ENCODE measurements at regions of chr2 and their contacts with region 1.

Region 1: DNA sequence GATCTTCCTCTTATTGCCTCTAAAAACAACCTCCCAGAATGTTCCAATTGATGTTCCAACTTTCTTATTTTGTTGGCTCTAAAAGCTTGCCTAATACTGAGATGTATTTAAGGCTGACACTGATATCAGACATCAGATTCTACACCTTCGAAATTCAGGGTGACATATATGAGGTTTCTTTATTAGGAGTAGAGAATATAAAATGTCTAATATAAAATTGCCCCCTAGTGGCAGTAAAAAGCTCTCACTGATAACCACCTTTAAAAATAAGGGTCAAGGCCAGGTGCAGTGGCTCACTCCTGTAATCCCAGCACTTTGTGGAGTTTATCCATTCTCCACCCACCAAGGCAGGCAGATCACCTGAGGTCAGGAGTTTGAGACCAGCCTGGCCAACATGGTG is 789.7 kb upstream of the SLC39A10 start:
- DNase-seq: peak; percentile 47
- H3K4me3 ChIP-seq: no peak overlapping the region
- H3K27ac ChIP-seq: no peak overlapping the region
- H3K4me1 ChIP-seq: no peaks in the 10 kb centered on the region
- H3K27me3 ChIP-seq: no peaks in the 10 kb centered on the region
- CTCF ChIP-seq: peak; percentile 28 to 35
- POLR2A ChIP-seq: no peak

Region 2: GRCh38 chr2:194166818-194167217 is 700.5 kb before region 1 on chr2:
- CTCF ChIA-PET with region 1: interaction called, 6 read pairs
- POLR2A ChIA-PET with region 1: no interaction called
- dilution Hi-C with region 1: no loop called
- intact Hi-C with region 1: loop called (anchors 10 kb)
- DNase-seq: peak; percentile 6
- H3K4me3 ChIP-seq: no peak overlapping the region
- H3K27ac ChIP-seq: no peak overlapping the region
- H3K4me1 ChIP-seq: no peaks in the 10 kb centered on the region
- H3K27me3 ChIP-seq: no peaks in the 10 kb centered on the region
- CTCF ChIP-seq: peak; percentile 27 to 38
- POLR2A ChIP-seq: no peak

Region 3: GRCh38 chr2:194545978-194546377 is 321.4 kb before region 1 on chr2:
- CTCF ChIA-PET with region 1: interaction called, 70 read pairs
- POLR2A ChIA-PET with region 1: no interaction called
- dilution Hi-C with region 1: no loop called
- intact Hi-C with region 1: loop called (anchors 1 kb)
- DNase-seq: peak; percentile 40
- H3K4me3 ChIP-seq: no peak overlapping the region
- H3K27ac ChIP-seq: no peak overlapping the region
- H3K4me1 ChIP-seq: peaks cover 2% of the 10 kb centered on the region
- H3K27me3 ChIP-seq: no peaks in the 10 kb centered on the region
- CTCF ChIP-seq: peak in 1 of 2 donors; percentile 6
- POLR2A ChIP-seq: no peak

Region 4: GRCh38 chr2:194559964-194560363 is 307.4 kb before region 1 on chr2:
- CTCF ChIA-PET with region 1: interaction called, 10 read pairs
- POLR2A ChIA-PET with region 1: no interaction called
- dilution Hi-C with region 1: no loop called
- intact Hi-C with region 1: no loop called
- DNase-seq: no peak
- H3K4me3 ChIP-seq: no peak overlapping the region
- H3K27ac ChIP-seq: no peak overlapping the region
- H3K4me1 ChIP-seq: no peaks in the 10 kb centered on the region
- H3K27me3 ChIP-seq: no peaks in the 10 kb centered on the region
- CTCF ChIP-seq: peak in 1 of 2 donors; percentile 20
- POLR2A ChIP-seq: no peak

Region 5: DNA sequence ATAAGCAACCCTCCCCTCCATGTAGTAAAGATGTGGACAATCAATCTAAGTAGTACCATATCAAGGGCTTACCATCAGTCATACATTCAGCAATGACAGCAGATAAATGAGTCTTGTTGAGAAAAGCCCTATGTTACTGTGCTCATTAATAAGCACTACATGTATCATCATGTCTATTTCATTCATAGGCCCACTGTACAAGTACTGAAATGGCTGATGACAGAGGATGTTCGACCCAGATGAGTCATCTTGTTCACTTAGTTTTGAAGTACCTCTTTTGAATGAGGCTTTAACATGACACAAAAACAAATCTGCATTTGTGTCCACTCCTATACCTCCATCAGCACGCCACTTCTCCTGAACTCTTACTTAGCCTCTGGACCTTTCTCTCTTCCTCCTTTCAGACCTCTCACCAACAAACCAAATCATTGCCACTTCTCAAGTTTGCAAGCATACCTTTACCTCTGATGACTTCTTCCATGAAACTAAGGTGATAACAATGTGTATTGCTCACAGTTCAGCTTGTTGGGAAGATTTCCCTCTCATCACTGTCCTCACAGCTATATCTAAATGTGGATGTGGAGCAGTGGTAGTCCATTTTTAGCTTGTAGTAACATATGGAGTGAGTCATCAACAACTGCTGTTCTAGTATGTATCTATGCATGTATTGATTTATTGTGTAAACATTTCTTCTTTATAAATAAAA is 131.3 kb before region 1 on chr2:
- CTCF ChIA-PET with region 1: interaction called, 4 read pairs
- POLR2A ChIA-PET with region 1: no interaction called
- dilution Hi-C with region 1: no loop called
- intact Hi-C with region 1: loop called (anchors 5 kb)
- DNase-seq: no peak
- H3K4me3 ChIP-seq: no peak overlapping the region
- H3K27ac ChIP-seq: no peak overlapping the region
- H3K4me1 ChIP-seq: no peaks in the 10 kb centered on the region
- H3K27me3 ChIP-seq: no peaks in the 10 kb centered on the region
- CTCF ChIP-seq: no peak
- POLR2A ChIP-seq: no peak

Region 6: DNA sequence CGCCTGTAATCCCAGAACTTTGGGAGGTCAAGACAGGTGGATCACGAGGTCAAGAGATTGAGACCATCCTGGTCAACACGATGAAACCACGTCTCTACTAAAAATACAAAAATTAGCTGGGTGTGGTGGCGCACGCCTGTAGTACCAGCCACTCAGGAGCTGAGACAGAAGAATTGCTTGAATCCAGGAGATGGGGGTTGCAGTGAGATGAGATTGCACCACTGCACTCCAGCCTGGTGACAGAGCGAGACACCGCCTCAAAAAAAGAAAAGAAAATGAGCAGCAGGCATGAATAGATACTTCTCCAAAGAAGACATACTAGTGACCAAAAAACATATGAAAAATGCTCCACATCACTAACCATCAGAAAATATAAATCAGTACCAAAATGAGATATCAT is 1062.8 kb after region 1 on chr2:
- CTCF ChIA-PET with region 1: no interaction called
- POLR2A ChIA-PET with region 1: no interaction called
- dilution Hi-C with region 1: no loop called
- intact Hi-C with region 1: loop called (anchors 10 kb)
- DNase-seq: no peak
- H3K4me3 ChIP-seq: no peak overlapping the region
- H3K27ac ChIP-seq: no peak overlapping the region
- H3K4me1 ChIP-seq: no peaks in the 10 kb centered on the region
- H3K27me3 ChIP-seq: no peaks in the 10 kb centered on the region
- CTCF ChIP-seq: no peak
- POLR2A ChIP-seq: no peak

Measured in endothelial cell of umbilical vein (primary cell).